Heart left ventricle (tissue), 16 donors: ENCODE measurements at regions of chr4 and their contacts with region 1.

Region 1: GRCh38 chr4:165464813-165465381 is 86.1 kb downstream of the CPE start:
- DNase-seq: no peak
- ATAC-seq: peak in 2 of 4 donors; percentile 59 to 62
- H3K4me3 ChIP-seq: no peak overlapping the region
- H3K27ac ChIP-seq: no peak overlapping the region
- H3K4me1 ChIP-seq: peaks cover 0 to 14% (median 0%) of the 10 kb centered on the region in 12 donors
- H3K27me3 ChIP-seq: no peaks in the 10 kb centered on the region
- CTCF ChIP-seq: peak; percentile 54 to 89 (median 80)
- POLR2A ChIP-seq: no peak

Region 2: DNA sequence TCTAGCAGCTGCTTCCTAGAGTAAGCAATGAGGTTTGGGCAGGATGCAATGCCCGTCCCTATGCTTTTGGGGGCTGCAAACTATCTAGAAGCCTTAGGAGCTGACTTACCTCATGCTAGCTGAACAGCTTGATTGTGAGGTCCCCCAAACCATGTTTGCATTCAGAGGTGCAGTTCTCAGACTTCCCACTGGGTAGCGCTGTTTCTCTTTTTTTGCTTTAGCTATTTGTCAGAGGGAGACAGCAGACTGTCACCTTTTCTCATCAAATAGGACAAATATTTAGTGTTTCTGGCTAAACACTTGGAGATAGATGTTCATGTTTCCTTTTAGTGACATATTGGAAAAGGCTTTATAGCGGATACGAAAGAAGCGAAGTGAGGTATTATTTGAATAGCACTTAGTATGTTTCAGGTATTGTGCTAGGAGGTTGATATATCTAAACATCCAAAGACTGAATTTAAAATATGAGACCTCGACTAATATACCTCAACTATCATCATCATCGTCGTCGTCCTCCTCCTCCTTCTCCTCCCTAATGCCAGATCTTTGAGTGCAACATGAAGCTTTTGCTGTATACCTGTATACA is 333.6 kb before region 1 on chr4:
- intact Hi-C with region 1: loop called (anchors 1 to 2 kb)
- DNase-seq: peak in 2 of 5 donors; percentile 35 to 45
- ATAC-seq: peak in 3 of 4 donors; percentile 64 to 80 (median 65)
- H3K4me3 ChIP-seq: no peak overlapping the region
- H3K27ac ChIP-seq: no peak overlapping the region
- H3K4me1 ChIP-seq: peaks cover 0 to 19% (median 0%) of the 10 kb centered on the region in 12 donors
- H3K27me3 ChIP-seq: peaks cover 0 to 5% (median 0%) of the 10 kb centered on the region in 9 donors
- CTCF ChIP-seq: peak; percentile 78 to 94 (median 82)
- POLR2A ChIP-seq: no peak

Region 3: GRCh38 chr4:165343353-165344191 is 121.3 kb before region 1 on chr4:
- intact Hi-C with region 1: loop called in 1 of 10 experiments (anchors 10 kb)
- DNase-seq: no peak
- ATAC-seq: no peak
- H3K4me3 ChIP-seq: no peak overlapping the region
- H3K27ac ChIP-seq: no peak overlapping the region
- H3K4me1 ChIP-seq: no peaks in the 10 kb centered on the region
- H3K27me3 ChIP-seq: no peaks in the 10 kb centered on the region
- CTCF ChIP-seq: peak in 7 of 12 donors; percentile 16 to 48 (median 34)
- POLR2A ChIP-seq: no peak

Region 4: DNA sequence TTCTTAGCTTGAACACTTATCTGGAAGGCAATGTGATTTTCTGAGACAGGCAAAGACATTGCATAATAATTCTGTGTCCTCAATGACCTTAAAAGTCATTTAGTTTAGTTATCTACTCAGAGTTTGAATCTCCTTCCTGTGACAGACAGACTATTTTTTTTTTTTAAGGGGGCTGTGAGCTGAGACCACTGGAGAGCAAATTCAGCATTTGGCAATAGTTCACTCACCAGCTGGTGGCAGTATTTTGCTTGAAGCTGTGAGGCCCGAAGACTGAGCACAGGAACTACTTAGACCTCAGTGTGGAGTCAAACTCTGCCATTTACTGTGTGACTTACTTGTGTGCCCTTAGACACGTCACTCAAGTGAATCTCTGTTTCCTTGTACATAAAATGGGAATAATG is 109.0 kb before region 1 on chr4:
- intact Hi-C with region 1: loop called in 9 of 10 experiments (anchors 2 to 10 kb)
- DNase-seq: peak in 2 of 5 donors; percentile 12 to 35
- ATAC-seq: peak in 1 of 4 donors; percentile 49
- H3K4me3 ChIP-seq: no peak overlapping the region
- H3K27ac ChIP-seq: no peak overlapping the region
- H3K4me1 ChIP-seq: peaks cover 0 to 17% (median 0%) of the 10 kb centered on the region in 12 donors
- H3K27me3 ChIP-seq: peaks cover 0 to 14% (median 0%) of the 10 kb centered on the region in 9 donors
- CTCF ChIP-seq: peak in 10 of 12 donors; percentile 10 to 56 (median 32)
- POLR2A ChIP-seq: no peak

Region 5: DNA sequence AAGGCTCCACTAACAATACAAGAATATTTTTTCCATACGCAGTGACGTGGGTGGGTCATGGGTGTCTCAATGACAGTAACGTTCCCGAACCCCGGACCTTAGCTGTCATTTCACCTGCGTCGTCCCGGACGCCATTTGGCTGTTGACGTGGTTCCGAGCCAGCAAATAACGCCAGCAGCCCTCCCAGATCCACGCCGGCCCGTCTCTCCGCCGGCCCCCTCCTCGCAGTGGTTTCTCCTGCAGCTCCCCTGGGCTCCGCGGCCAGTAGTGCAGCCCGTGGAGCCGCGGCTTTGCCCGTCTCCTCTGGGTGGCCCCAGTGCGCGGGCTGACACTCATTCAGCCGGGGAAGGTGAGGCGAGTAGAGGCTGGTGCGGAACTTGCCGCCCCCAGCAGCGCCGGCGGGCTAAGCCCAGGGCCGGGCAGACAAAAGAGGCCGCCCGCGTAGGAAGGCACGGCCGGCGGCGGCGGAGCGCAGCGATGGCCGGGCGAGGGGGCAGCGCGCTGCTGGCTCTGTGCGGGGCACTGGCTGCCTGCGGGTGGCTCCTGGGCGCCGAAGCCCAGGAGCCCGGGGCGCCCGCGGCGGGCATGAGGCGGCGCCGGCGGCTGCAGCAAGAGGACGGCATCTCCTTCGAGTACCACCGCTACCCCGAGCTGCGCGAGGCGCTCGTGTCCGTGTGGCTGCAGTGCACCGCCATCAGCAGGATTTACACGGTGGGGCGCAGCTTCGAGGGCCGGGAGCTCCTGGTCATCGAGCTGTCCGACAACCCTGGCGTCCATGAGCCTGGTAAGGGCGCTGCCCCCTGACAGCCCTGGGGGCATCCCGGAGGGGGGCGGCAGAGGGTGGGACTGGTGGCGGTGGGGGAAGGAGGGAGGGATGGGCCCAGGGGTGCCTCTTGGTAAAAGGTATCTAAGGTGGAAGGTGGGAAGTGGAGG is 85.9 kb before region 1 on chr4 and contains the start of gene CPE:
- intact Hi-C with region 1: loop called in 6 of 10 experiments (anchors 5 kb)
- DNase-seq: peak; percentile 67 to 87 (median 80)
- ATAC-seq: peak; percentile 86 to 99 (median 98)
- H3K4me3 ChIP-seq: peak within 1 kb of the TSS; percentile 39 to 71 (median 59)
- H3K27ac ChIP-seq: peak within 1 kb of the TSS; percentile 17 to 80 (median 64)
- H3K4me1 ChIP-seq: peaks cover 0 to 17% (median 1%) of the 10 kb centered on the region in 12 donors
- H3K27me3 ChIP-seq: peaks cover 0 to 44% (median 4%) of the 10 kb centered on the region in 9 donors
- CTCF ChIP-seq: peak in 9 of 12 donors; percentile 11 to 67 (median 47)
- POLR2A ChIP-seq: peak in 1 of 2 donors; percentile 35
- total RNA-seq, gene CPE: 16.6 to 115 (median 34.5) TPM

Region 6: DNA sequence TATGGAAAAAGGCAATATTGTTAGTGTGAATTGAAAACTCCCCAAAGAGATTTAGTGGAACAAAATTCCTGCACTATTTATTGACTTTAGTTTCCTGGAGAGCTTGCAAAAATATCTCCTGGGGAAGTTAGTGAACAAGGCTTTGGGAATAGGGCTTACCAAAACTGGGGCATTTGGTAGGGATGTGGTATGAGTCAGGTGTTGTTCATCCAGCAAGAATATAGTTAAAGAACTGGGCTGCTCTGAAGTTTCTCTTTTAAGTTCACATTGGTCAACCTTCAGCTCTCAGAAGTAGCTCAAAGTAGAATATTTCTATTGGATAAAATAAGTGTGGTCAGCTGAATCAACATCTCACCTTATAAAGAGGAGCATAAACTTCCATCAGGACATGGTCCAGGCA is 99.0 kb after region 1 on chr4:
- intact Hi-C with region 1: no loop called
- DNase-seq: no peak
- ATAC-seq: no peak
- H3K4me3 ChIP-seq: no peak overlapping the region
- H3K27ac ChIP-seq: no peak overlapping the region
- H3K4me1 ChIP-seq: no peaks in the 10 kb centered on the region
- H3K27me3 ChIP-seq: no peaks in the 10 kb centered on the region
- CTCF ChIP-seq: no peak
- POLR2A ChIP-seq: no peak